ENCODE measurements at regions of chr12 and their contacts with region 1.

Region 1: DNA sequence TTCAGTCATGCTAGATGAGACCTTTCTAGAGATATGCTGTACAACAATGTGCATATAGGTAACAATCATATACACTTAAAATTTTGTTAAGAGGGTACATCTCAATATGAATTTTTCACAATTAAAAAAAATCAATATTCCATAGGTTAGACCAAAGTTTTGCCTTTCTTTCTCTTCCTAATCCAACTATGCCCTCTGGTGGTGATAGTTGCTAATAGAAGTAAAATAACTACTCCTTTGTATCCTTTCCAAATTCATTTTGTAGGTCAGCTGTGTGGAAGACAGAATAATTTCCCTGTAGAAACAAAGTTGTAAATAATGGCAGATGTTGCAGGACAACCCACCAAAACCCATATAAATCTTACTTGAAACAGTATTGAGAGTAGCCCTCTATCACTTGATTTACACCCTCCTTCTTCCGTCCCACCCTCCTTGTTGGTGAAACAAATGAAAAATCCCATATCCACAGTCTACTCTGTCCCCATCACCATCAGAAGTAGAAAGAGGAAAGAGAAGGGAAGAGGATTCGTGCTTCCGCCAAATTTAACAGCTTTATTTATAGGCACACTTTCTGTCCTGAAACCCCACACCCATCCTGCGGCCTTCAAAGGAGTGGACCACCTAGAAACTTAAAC is 34.2 kb upstream of the KICS2 start:
- DNase-seq: no peak
- ATAC-seq: peak; percentile 27
- H3K4me3 Mint-ChIP-seq: no peak overlapping the region
- H3K27ac Mint-ChIP-seq: no peak overlapping the region
- H3K4me1 Mint-ChIP-seq: no peaks in the 10 kb centered on the region
- H3K27me3 Mint-ChIP-seq: no peaks in the 10 kb centered on the region
- CTCF ChIP-seq: peak; percentile 84

Region 2: DNA sequence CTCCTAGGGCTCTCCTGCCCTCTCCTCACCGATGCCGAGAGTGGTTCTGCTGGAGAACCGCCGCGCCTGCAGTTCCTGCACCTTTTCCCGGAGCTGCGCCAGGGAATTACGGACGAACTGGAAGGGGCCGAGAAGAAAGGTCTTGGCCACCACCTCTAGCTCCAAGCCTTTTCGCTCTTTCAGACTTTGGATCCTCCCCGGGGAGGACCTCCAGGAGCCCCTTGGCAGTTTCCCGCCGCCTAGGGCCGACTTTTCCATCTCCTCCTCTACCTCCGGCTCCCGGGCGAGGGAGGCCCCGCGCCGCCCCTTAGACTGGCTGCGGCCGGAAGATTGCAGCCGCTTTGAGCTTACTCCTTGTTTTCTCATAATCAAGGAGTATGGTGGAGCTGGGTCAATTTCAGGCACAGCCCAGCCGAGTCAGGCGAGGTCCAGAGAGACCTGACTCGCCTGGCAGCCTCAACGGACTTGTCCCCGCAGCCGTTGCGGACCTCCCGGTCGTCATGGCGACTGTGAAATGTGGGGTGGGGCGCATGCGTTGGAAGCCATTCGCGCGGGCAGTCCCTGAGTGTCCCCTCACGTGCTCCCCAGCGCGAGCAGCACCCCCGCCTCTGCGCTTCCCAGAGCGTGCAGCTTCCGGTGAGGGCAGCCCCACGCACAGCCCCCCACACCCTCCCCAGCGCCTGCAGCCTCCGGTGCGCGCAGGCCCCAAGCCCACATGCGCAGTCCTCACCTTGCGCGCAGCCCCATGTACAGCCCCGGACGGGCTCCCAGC is 588.1 kb before region 1 on chr12 and contains the start of gene DPY19L2:
- CTCF ChIA-PET with region 1: interaction called, 3 read pairs
- POLR2A ChIA-PET with region 1: no interaction called
- intact Hi-C with region 1: loop called (anchors 10 kb)
- DNase-seq: peak; percentile 87
- ATAC-seq: peak; percentile 94
- H3K4me3 Mint-ChIP-seq: peak within 1 kb of the TSS; percentile 85
- H3K27ac Mint-ChIP-seq: peak within 1 kb of the TSS; percentile 85
- H3K4me1 Mint-ChIP-seq: peaks cover 32% of the 10 kb centered on the region
- H3K27me3 Mint-ChIP-seq: no peaks in the 10 kb centered on the region
- CTCF ChIP-seq: no peak
- total RNA-seq, gene DPY19L2: 6.1 to 6.4 TPM

Region 3: GRCh38 chr12:63843721-63844390 is 412.4 kb before region 1 on chr12:
- CTCF ChIA-PET with region 1: interaction called, 11 read pairs
- POLR2A ChIA-PET with region 1: interaction called, 3 read pairs
- intact Hi-C with region 1: loop called (anchors 5 kb)
- DNase-seq: peak; percentile 85
- ATAC-seq: peak; percentile 96
- H3K4me3 Mint-ChIP-seq: peak overlapping the region; percentile 68
- H3K27ac Mint-ChIP-seq: no peak overlapping the region
- H3K4me1 Mint-ChIP-seq: peaks cover 8% of the 10 kb centered on the region
- H3K27me3 Mint-ChIP-seq: peaks cover 34% of the 10 kb centered on the region
- CTCF ChIP-seq: peak; percentile 86